ENCODE measurements at regions of chr2 and their contacts with region 1.

Region 1: GRCh38 chr2:192162392-192163042 is 32.2 kb downstream of the TMEFF2 start:
- DNase-seq: peak; percentile 58 to 79
- H3K4me3 ChIP-seq: no peak overlapping the region
- H3K4me3 Mint-ChIP-seq: no peak overlapping the region
- H3K27ac Mint-ChIP-seq: no peak overlapping the region
- H3K4me1 ChIP-seq: peaks cover 4% of the 10 kb centered on the region; the same call in 1 of the 2 replicates
- H3K4me1 Mint-ChIP-seq: no peaks in the 10 kb centered on the region
- H3K27me3 ChIP-seq: no peaks in the 10 kb centered on the region; the same call in 1 of the 2 replicates
- H3K27me3 Mint-ChIP-seq: peaks cover 15% of the 10 kb centered on the region
- CTCF ChIP-seq: peak; percentile 89 to 93

Region 2: DNA sequence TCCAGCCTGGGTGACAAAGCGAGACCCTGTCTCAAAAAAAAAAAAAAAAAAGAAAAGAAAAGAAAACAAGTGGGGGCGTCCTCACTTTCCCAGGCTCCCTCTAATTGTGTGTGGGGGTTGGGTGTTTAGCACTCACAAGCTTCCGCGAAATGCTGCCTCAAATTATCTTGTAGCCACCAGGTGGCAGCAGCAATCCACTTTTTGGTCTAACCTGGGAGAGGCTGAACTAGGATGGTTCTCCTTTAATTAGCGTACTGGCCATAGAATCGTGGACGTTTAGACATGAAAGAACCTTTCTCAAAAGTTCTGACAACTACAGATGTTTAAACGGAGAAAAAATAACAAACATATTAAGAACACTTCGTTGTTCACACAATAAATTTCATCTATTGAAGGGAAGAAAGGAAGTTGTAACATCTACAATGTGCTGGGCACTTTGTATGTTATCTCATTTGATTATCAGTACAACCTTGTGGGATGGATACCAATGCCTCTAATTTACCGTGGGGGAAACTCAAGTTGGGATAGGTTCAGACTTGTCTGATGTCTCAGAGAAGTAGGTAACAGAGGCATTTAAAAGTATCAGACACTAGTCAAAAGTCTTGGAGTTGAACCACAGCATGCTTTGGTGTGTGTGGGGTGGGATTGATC is 607.3 kb before region 1 on chr2:
- CTCF ChIA-PET with region 1: interaction called, 13 read pairs
- POLR2A ChIA-PET with region 1: no interaction called
- intact Hi-C with region 1: loop called (anchors 1 kb)
- DNase-seq: peak; percentile 86 to 92
- H3K4me3 ChIP-seq: no peak overlapping the region
- H3K4me3 Mint-ChIP-seq: peak overlapping the region; percentile 49
- H3K27ac Mint-ChIP-seq: peak overlapping the region; percentile 29
- H3K4me1 ChIP-seq: peaks cover 7% of the 10 kb centered on the region
- H3K4me1 Mint-ChIP-seq: peaks cover 29% of the 10 kb centered on the region
- H3K27me3 ChIP-seq: no peaks in the 10 kb centered on the region
- H3K27me3 Mint-ChIP-seq: no peaks in the 10 kb centered on the region
- CTCF ChIP-seq: peak; percentile 72 to 84

Region 3: DNA sequence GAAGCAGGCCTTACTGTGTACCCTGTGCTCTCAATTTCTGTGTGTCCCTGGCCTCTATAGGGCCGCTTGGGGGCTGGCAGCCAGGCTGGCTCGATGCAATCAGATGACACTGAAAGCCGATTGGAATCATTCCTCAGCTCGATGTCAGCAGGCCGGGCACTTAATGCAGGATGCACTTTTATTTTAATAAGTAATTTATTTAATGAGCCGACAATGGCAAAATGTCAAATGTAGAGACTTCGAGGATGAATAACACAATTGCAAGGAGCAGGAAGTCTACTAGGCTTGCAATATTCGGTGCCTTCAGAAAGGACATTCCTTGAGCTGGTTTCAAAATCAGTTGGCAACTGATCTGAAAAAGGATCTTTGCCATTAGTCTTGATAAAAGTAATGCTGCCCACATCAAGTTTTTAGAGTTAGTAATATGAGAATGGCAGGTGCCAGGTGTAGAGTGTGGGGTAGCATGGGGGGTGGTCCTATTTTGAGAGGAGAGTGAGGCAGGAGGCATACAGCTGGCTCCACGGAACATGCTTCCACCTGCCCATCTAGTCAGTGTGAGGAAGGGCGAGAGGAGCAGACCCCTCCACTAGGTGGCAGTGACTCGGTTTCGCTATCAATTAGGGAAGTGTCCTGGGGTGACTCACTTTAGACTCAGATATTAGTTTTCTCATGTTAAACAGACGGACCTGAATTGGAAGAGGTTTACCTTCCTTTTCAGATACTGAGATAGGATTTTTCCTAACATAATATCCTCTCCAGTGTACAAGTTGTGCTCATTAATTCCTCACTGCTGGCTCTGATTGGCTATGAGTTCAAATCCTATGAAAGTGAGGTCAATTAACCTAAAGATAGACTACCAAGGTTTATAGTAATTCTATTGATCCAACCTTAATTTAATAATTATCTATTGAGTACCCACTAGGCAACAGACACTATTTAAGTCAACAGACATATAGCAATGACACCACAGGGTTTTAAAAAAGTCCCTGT is 403.7 kb before region 1 on chr2:
- CTCF ChIA-PET with region 1: interaction called, 7 read pairs
- POLR2A ChIA-PET with region 1: no interaction called
- intact Hi-C with region 1: loop called (anchors 2 kb)
- DNase-seq: peak; percentile 75 to 77
- H3K4me3 ChIP-seq: no peak overlapping the region
- H3K4me3 Mint-ChIP-seq: no peak overlapping the region
- H3K27ac Mint-ChIP-seq: no peak overlapping the region
- H3K4me1 ChIP-seq: 0 out of 2 replicates have a peak, but pooled peaks cover 6% of the 10 kb centered on the region
- H3K4me1 Mint-ChIP-seq: no peaks in the 10 kb centered on the region
- H3K27me3 ChIP-seq: no peaks in the 10 kb centered on the region
- H3K27me3 Mint-ChIP-seq: no peaks in the 10 kb centered on the region
- CTCF ChIP-seq: peak; percentile 63 to 89

Region 4: GRCh38 chr2:191839918-191840804 is 322.4 kb before region 1 on chr2:
- CTCF ChIA-PET with region 1: interaction called, 12 read pairs
- POLR2A ChIA-PET with region 1: no interaction called
- intact Hi-C with region 1: no loop called
- DNase-seq: no peak
- H3K4me3 ChIP-seq: no peak overlapping the region
- H3K4me3 Mint-ChIP-seq: no peak overlapping the region
- H3K27ac Mint-ChIP-seq: no peak overlapping the region
- H3K4me1 ChIP-seq: no peaks in the 10 kb centered on the region
- H3K4me1 Mint-ChIP-seq: no peaks in the 10 kb centered on the region
- H3K27me3 ChIP-seq: no peaks in the 10 kb centered on the region
- H3K27me3 Mint-ChIP-seq: no peaks in the 10 kb centered on the region
- CTCF ChIP-seq: peak in 1 of 2 experiments; percentile 38

Region 5: GRCh38 chr2:191946471-191947182 is 215.9 kb before region 1 on chr2:
- CTCF ChIA-PET with region 1: no interaction called
- POLR2A ChIA-PET with region 1: no interaction called
- intact Hi-C with region 1: loop called (anchors 5 kb)
- DNase-seq: no peak
- H3K4me3 ChIP-seq: no peak overlapping the region
- H3K4me3 Mint-ChIP-seq: no peak overlapping the region
- H3K27ac Mint-ChIP-seq: no peak overlapping the region
- H3K4me1 ChIP-seq: no peaks in the 10 kb centered on the region
- H3K4me1 Mint-ChIP-seq: no peaks in the 10 kb centered on the region
- H3K27me3 ChIP-seq: no peaks in the 10 kb centered on the region
- H3K27me3 Mint-ChIP-seq: no peaks in the 10 kb centered on the region
- CTCF ChIP-seq: no peak

Measured in Caco-2 (cell line).